PC-3 (cell line): ENCODE measurements at regions of chr6 and their contacts with region 1.

Region 1: GRCh38 chr6:24494821-24495795 is at the start of gene ALDH5A1:
- DNase-seq: peak; percentile 62
- ATAC-seq: peak; percentile 80
- H3K4me3 ChIP-seq: peak within 1 kb of the TSS; percentile 72
- H3K27ac ChIP-seq: no peak within 1 kb of the TSS
- H3K4me1 ChIP-seq: peaks cover 5% of the 10 kb centered on the region
- H3K27me3 ChIP-seq: no peaks in the 10 kb centered on the region
- CTCF ChIP-seq: 0 out of 2 replicates have a peak, but pooled peaks have one; percentile 25
- total RNA-seq, gene ALDH5A1: 11.9 and 12.2 TPM in 2 replicates

Region 2: DNA sequence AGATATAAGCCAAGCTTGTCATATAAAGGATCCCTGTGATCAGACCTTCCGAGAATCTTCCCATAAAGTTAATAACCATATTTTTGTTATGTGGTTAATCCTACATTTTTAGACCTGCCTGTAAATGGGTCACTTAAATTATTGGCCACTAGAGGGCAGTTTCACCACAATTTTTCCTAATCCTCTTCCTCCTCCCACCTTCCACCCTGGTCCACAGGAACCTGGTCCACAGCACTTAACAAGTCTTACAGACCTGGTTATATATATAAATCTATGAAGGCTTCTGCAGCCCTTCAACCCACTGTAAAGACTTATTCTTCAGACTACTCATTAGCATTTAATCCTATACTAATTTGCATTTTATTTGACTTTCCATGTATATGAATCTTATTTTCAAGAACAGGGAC is 64.1 kb before region 1 on chr6:
- CTCF ChIA-PET with region 1: interaction called, 5 read pairs
- POLR2A ChIA-PET with region 1: no interaction called
- intact Hi-C with region 1: loop called (anchors 2 kb)
- DNase-seq: peak; percentile 74
- ATAC-seq: peak; percentile 27; the same call in 1 of the 2 replicates
- H3K4me3 ChIP-seq: no peak overlapping the region
- H3K27ac ChIP-seq: no peak overlapping the region
- H3K4me1 ChIP-seq: peaks cover 37% of the 10 kb centered on the region
- H3K27me3 ChIP-seq: no peaks in the 10 kb centered on the region
- CTCF ChIP-seq: peak; percentile 89